WTC11 (cell line): ENCODE measurements at regions of chr19 and their contacts with region 1.

Region 1: GRCh38 chr19:47428177-47428894 is 9.0 kb upstream of the MEIS3 start:
- DNase-seq: peak; percentile 97
- ATAC-seq: peak; percentile 75
- H3K4me3 Mint-ChIP-seq: no peak overlapping the region
- H3K27ac Mint-ChIP-seq: no peak overlapping the region
- H3K4me1 Mint-ChIP-seq: peaks cover 13% of the 10 kb centered on the region
- H3K27me3 Mint-ChIP-seq: peaks cover 80% of the 10 kb centered on the region
- CTCF ChIP-seq: no peak

Region 2: DNA sequence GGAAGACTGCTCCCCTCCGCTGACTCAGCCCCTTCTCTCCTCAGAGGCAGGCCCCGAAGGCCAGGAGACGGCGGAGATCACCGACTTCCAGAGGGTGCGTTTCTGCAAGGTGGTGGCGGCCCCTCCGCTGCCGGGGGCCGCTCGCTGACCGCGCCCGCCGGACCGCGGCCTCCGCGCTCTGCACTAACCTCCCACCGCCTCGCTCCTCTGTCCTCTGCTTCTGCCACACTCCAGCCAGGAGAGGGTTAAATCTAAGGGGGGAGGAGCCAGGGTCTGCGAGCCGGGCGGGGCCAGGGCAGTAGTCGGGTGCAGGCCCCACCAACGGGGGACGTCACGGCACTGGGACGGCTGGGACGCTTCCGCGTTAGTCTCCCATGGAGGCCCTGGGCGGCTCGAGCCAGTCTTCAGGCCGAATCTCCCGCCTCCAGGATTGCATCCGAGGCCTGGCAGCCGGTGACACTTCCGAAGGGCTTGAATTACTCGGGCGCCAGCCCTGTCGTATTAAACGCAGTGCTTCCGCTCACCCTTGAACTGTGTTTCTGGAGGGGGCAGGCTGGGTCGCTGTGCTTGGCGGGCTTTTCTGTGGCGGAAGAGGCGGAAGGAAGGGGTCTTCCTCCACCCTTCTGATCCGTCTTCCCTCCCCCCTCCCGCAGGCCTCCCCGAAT is 154.9 kb before region 1 on chr19:
- CTCF ChIA-PET with region 1: interaction called, 20 read pairs
- POLR2A ChIA-PET with region 1: interaction called, 12 read pairs
- DNase-seq: peak; percentile 93
- ATAC-seq: peak; percentile 63
- H3K4me3 Mint-ChIP-seq: peak overlapping the region; percentile 91
- H3K27ac Mint-ChIP-seq: peak overlapping the region; percentile 99
- H3K4me1 Mint-ChIP-seq: peaks cover 16% of the 10 kb centered on the region
- H3K27me3 Mint-ChIP-seq: peaks cover 18% of the 10 kb centered on the region
- CTCF ChIP-seq: no peak

Region 3: GRCh38 chr19:47391510-47392223 is 36.7 kb before region 1 on chr19:
- CTCF ChIA-PET with region 1: interaction called, 33 read pairs
- POLR2A ChIA-PET with region 1: no interaction called
- DNase-seq: peak; percentile 91
- ATAC-seq: peak; percentile 99
- H3K4me3 Mint-ChIP-seq: 0 out of 2 replicates have a peak overlapping the region, but pooled peaks have one; percentile 21
- H3K27ac Mint-ChIP-seq: peak overlapping the region; percentile 58
- H3K4me1 Mint-ChIP-seq: peaks cover 22% of the 10 kb centered on the region
- H3K27me3 Mint-ChIP-seq: peaks cover 14% of the 10 kb centered on the region
- CTCF ChIP-seq: peak; percentile 92

Region 4: DNA sequence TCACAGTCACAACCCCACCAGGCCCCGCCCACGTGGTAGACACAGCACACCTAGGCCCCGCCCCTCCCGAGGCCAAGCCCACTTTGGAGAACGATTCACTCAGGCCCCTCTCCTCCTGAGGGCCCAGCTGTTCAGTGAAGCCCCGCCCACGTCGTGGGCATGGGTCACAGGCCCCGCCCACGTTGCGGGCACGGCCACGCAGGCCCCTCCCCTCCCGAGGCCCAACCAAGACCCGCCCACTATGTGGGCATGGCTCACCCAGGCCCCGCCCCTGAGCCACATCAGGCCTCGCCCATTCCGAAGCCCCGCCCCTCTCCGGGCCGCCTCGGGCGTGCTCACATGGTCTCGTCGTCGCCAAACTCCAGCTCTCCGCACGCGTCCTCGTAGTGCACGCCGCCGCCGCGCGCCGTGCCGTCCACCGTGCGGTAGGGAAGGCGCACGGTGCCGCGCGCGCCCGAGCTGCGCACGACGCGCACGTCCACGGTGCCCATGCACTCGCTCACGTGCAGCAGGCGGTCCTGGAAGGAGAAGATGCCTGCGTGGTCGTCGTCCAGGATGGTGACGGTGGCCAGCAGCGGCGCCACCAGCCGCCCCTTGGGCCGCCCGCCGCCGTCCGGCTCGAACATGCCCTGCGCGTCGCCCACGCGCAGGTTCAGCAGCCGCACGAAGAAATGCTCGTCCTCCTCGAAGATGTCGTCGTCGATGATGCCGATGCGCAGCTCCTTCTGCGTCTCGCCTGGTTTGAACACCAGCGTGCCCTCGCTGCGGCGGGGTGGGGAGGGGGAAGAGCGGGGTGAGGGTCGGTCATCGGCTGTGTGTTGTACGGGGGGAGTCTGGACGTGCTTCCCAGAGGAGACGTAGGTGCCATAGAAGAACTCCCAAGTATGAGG is 19.4 kb after region 1 on chr19:
- CTCF ChIA-PET with region 1: interaction called, 40 read pairs
- POLR2A ChIA-PET with region 1: interaction called, 3 read pairs
- DNase-seq: peak; percentile 99
- ATAC-seq: peak; percentile 89
- H3K4me3 Mint-ChIP-seq: peak overlapping the region; percentile 79
- H3K27ac Mint-ChIP-seq: peak overlapping the region; percentile 81
- H3K4me1 Mint-ChIP-seq: peaks cover 36% of the 10 kb centered on the region
- H3K27me3 Mint-ChIP-seq: peaks cover 56% of the 10 kb centered on the region
- CTCF ChIP-seq: no peak

Region 5: GRCh38 chr19:47514869-47515588 is 86.7 kb after region 1 on chr19 and contains the start of gene NAPA:
- CTCF ChIA-PET with region 1: interaction called, 26 read pairs
- POLR2A ChIA-PET with region 1: interaction called, 4 read pairs
- DNase-seq: peak; percentile 100
- ATAC-seq: peak; percentile 96
- H3K4me3 Mint-ChIP-seq: peak within 1 kb of the TSS; percentile 97
- H3K27ac Mint-ChIP-seq: peak within 1 kb of the TSS; percentile 96
- H3K4me1 Mint-ChIP-seq: peaks cover 30% of the 10 kb centered on the region
- H3K27me3 Mint-ChIP-seq: no peaks in the 10 kb centered on the region
- CTCF ChIP-seq: 0 out of 2 replicates have a peak, but pooled peaks have one; percentile 93
- total RNA-seq, gene NAPA: 58.4 to 66.8 TPM (median 61.3 TPM) in 3 replicates

Region 6: DNA sequence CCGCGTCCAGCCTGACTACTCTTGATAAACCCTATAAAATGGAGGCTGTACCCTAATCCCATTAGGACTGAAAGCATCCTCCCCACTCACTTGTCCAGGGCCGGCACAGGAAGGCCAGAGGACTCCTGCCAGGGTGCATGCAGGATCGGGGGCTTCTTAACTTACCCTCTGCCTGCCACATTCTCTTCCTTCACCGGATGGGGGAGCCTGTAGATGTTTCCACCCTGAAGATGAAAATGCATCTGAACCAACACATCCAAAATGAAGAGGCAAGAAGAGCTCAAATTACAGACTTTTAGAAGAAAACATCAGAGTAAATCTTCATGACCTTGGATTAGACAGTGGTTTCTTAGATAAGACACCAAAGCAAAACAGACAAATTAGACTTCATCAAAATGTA is 112.4 kb after region 1 on chr19:
- CTCF ChIA-PET with region 1: no interaction called
- POLR2A ChIA-PET with region 1: no interaction called
- DNase-seq: peak; percentile 36
- ATAC-seq: peak; percentile 71
- H3K4me3 Mint-ChIP-seq: no peak overlapping the region
- H3K27ac Mint-ChIP-seq: no peak overlapping the region
- H3K4me1 Mint-ChIP-seq: peaks cover 4% of the 10 kb centered on the region
- H3K27me3 Mint-ChIP-seq: no peaks in the 10 kb centered on the region
- CTCF ChIP-seq: no peak

Region 7: GRCh38 chr19:47707135-47707925 is 279.0 kb after region 1 on chr19:
- CTCF ChIA-PET with region 1: interaction called, 45 read pairs
- POLR2A ChIA-PET with region 1: no interaction called
- DNase-seq: peak; percentile 92
- ATAC-seq: peak; percentile 96
- H3K4me3 Mint-ChIP-seq: no peak overlapping the region; the same call in 1 of the 2 replicates
- H3K27ac Mint-ChIP-seq: no peak overlapping the region
- H3K4me1 Mint-ChIP-seq: 0 out of 2 replicates have a peak, but pooled peaks cover 2% of the 10 kb centered on the region
- H3K27me3 Mint-ChIP-seq: peaks cover 5% of the 10 kb centered on the region
- CTCF ChIP-seq: peak; percentile 71

Region 8: DNA sequence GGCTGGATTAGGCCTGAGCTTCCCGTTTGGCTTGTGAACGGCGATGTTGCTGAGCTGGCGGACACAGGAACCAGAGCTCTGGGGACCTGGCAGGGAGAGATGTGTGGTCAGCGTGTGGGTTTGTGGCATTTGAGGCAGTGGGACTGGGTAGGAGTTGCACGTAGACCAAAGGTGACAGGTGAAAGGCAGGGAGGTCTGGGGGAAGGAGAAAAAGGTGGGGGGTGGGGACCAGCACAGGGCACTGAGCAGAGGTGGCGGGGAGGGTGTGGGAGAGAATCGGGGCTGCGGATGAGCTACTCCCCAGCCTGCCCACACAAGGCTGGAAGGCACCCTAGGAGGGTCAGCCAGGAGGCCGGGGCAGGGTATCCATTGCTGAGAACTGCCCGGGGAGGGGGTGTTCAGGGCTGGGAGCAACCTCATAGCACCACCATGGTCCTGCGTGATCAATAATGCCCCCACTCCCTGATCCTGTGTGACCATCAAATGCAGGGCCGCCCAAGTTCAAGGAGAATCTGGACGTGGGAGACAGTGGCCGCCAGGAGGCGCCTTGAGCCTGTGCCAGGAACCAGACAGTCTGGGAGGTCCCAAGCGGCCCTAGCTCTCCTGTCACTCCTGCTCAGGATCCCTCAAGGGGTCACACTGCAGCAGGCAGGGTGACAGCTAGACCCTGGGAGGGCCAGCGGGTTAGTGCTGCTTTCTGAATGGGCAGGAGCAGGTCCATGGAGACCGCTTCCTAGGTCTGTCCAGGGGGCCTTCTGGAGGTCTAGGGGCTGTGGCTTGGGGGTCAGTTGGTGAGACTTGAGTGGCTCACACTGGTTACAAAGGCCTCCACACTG is 337.4 kb after region 1 on chr19:
- CTCF ChIA-PET with region 1: interaction called, 10 read pairs
- POLR2A ChIA-PET with region 1: no interaction called
- DNase-seq: peak; percentile 88
- ATAC-seq: peak; percentile 79
- H3K4me3 Mint-ChIP-seq: no peak overlapping the region
- H3K27ac Mint-ChIP-seq: peak overlapping the region; percentile 85
- H3K4me1 Mint-ChIP-seq: peaks cover 22% of the 10 kb centered on the region
- H3K27me3 Mint-ChIP-seq: no peaks in the 10 kb centered on the region
- CTCF ChIP-seq: peak; percentile 80